ENCODE measurements at regions of chr1 and their contacts with region 1.

Region 1: DNA sequence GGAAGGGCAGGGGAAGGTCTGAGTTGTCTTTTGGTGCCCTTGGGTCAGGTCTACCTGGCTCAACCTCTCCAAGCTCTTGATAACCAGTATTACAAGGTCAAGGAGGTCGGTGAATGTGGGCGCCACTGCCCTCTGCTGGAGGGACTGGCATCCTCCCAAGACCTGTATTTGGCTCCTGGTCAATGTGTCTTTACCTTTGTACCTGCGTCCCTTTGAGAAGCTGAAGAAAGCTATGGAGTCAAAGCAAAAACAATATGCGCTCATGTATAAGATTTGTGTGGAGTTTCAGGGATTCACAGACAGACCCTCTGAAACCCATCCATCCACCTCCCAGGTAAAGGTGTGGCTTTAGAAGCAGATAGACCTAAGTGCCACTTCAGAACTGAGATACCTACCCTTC is 61.8 kb upstream of the NBL1 start:
- H3K4me3 ChIP-seq: no peak overlapping the region
- H3K27ac ChIP-seq: no peak overlapping the region
- H3K4me1 ChIP-seq: no peaks in the 10 kb centered on the region
- CTCF ChIP-seq: no peak

Region 2: DNA sequence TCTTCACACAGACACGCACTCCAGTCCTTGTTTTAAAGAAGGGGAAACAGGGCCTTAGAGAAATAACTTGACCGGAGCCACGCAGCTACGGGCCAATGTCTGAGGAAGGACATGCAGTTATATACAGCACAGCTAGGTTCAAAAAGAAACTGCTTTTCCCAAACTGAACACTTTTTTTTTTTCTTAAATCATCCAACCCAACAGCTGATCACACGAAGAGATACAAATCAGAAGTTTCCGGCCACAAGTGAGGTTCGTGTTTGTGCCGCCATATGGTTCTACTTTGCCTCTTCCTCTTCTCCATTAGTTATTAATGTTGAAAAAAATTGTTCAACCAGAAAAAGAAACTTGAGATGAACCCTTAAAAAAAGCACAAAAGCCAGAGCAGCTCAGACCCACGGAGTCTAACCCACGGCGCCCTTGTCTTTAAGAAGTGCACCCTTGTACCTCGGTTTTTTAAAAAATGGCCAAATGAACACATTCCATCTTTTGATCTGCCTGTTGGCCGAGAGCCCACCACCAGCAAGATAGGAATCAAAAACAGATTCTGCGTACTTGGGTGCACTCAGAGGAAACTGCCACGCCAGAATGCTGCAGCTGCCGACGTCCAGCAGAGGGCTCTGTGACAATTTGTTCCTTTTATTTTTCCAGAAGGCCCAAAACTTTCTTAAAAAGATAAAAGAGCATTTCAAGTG is 191.3 kb before region 1 on chr1:
- CTCF ChIA-PET with region 1: interaction called, 15 read pairs
- POLR2A ChIA-PET with region 1: no interaction called
- H3K4me3 ChIP-seq: no peak overlapping the region
- H3K27ac ChIP-seq: no peak overlapping the region
- H3K4me1 ChIP-seq: no peaks in the 10 kb centered on the region
- CTCF ChIP-seq: peak; percentile 43

Region 3: DNA sequence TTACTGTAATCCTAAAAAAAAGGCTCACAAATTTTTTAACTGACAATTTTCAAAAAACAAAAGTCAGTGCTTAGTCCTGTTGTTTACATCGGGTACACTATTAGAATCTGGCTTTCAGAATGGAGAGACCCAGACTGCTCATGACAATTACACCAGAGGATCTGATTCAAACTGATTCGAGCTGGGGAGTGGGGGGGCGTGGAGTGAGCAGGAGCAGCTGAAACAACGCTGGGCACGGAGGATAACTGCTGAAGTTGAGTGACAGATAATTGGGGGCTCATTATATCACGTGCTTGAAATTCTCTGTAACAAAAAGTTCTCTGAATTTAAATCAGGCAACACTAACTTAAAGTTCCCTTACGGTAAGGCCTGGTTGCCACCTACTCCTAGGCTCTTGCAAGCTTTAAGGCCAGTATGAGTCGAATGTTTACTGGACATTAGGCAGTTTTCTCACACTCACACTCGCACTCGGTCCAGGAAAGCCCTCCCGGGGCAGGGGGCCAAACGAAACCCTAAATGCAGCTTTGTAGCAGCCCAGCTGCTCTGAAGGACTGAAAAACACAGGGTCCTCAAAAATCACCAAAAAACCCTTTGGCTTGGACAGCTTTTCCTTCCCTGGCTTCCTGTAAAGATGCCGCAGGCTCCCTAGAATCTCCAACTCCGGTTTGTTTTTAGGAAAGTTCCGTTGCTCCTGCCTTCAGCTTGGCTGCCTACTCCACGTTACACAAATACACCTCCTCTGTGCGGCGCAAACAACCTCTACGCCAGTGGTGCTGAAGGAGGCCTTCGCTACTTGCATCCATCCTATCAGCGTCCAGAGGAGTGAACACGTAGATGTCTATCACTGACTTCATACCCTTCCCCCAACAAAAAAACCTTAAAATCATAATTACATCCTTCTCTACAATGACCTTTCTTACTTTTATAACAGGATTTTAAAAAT is 139.9 kb before region 1 on chr1:
- CTCF ChIA-PET with region 1: interaction called, 11 read pairs
- POLR2A ChIA-PET with region 1: interaction called, 4 read pairs
- H3K4me3 ChIP-seq: no peak overlapping the region
- H3K27ac ChIP-seq: no peak overlapping the region
- H3K4me1 ChIP-seq: peaks cover 23% of the 10 kb centered on the region
- CTCF ChIP-seq: no peak

Region 4: GRCh38 chr1:19477284-19478249 is 104.7 kb before region 1 on chr1:
- CTCF ChIA-PET with region 1: no interaction called
- POLR2A ChIA-PET with region 1: no interaction called
- H3K4me3 ChIP-seq: no peak overlapping the region
- H3K27ac ChIP-seq: no peak overlapping the region
- H3K4me1 ChIP-seq: peaks cover 3% of the 10 kb centered on the region; the same call in 1 of the 2 replicates
- CTCF ChIP-seq: no peak

Region 5: GRCh38 chr1:19488136-19488535 is 94.2 kb before region 1 on chr1:
- CTCF ChIA-PET with region 1: interaction called, 17 read pairs
- POLR2A ChIA-PET with region 1: no interaction called
- H3K4me3 ChIP-seq: no peak overlapping the region
- H3K27ac ChIP-seq: no peak overlapping the region
- H3K4me1 ChIP-seq: peaks cover 6% of the 10 kb centered on the region
- CTCF ChIP-seq: no peak

Region 6: GRCh38 chr1:19563324-19564097 is 18.8 kb before region 1 on chr1:
- CTCF ChIA-PET with region 1: interaction called, 12 read pairs
- POLR2A ChIA-PET with region 1: no interaction called
- H3K4me3 ChIP-seq: no peak overlapping the region
- H3K27ac ChIP-seq: no peak overlapping the region
- H3K4me1 ChIP-seq: no peaks in the 10 kb centered on the region
- CTCF ChIP-seq: no peak

Region 7: DNA sequence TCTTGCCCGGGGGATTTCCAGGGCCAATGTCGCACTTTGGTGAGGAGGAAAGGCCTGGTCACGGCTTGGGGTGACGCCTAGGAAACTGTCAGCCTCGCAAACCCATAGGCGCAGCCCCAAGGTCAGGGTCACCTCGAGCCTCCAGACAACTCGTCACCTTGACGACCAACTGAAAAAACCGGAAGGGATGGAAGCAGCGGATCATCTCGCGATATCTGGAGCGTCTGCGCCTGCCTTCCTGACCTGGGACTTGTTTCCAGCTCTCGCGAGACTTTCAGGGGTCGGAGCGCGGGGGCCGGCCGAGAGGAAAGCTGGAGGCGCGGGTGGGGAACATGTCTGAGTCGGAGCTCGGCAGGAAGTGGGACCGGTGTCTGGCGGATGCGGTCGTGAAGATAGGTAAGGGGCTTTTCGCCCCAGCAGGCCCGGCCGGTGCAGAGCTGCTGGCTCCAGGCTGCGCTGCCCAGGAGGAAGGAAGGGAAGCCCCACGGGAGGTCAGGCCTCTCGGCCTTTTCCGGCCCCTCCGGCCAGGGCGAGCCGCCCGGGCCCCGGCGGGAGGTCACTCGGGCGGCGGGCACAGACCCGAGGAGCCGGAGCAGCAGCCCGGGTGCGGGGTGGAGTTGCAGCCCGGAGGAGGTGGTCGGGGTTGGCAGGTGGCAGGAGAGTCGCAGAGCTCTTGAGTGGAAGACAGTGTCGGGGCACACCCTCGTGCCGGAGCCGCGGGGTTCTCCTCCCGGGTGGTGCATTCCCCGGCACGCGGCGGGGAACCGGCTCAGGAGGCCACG is 14.6 kb after region 1 on chr1:
- CTCF ChIA-PET with region 1: interaction called, 24 read pairs
- POLR2A ChIA-PET with region 1: interaction called, 5 read pairs
- H3K4me3 ChIP-seq: peak overlapping the region; percentile 91
- H3K27ac ChIP-seq: peak overlapping the region; percentile 82
- H3K4me1 ChIP-seq: no peaks in the 10 kb centered on the region
- CTCF ChIP-seq: peak; percentile 26; the same call in 1 of the 2 replicates

Region 8: DNA sequence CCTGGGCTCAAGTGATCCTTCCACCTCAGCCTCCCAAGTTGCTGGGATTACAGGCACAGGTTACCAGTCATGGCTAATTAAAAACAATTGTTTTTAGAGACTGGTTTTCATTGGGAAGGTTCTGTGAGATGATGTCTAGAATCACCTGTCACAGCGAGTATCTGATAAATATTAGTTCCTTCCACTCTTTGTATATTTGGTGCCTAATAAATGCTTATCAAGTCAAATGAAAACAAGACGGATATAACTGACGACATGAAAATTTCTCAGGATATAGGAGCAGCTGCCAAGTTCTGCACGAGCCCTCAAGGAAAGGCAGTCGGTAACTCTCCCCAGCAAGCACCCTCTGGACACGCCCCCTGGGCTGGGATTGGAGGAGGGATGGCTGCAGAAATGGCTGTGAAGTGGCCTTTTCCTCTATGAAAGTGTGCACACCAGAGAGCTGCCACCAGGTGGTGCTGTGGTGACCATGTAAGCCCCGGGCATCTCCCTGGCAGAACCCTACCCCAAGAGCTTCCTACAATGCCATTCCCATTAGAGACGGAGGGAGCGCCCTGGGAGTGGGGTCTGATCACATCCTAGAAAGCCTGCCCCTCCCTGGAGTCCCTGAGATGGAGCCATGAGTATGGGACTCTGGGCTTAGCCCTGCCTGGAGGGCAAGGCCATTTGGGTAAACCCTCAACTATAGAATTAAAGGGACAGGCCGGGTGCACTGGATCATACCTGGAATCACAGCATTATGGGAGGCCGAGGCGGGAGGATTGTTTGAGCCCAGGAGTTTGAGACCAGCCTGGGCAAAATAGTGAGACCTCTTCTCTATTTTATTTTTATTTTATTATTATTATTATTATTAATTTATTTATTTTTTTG is 133.3 kb after region 1 on chr1:
- CTCF ChIA-PET with region 1: no interaction called
- POLR2A ChIA-PET with region 1: no interaction called
- H3K4me3 ChIP-seq: no peak overlapping the region
- H3K27ac ChIP-seq: no peak overlapping the region
- H3K4me1 ChIP-seq: no peaks in the 10 kb centered on the region
- CTCF ChIP-seq: peak; percentile 89

Measured in HEK293 (cell line).